Activated CD4-positive, alpha-beta T cell treated with anti-CD3 and anti-CD28 coated beads for 36 hours (primary cell): ENCODE measurements at regions of chr5 and their contacts with region 1.

Region 1: DNA sequence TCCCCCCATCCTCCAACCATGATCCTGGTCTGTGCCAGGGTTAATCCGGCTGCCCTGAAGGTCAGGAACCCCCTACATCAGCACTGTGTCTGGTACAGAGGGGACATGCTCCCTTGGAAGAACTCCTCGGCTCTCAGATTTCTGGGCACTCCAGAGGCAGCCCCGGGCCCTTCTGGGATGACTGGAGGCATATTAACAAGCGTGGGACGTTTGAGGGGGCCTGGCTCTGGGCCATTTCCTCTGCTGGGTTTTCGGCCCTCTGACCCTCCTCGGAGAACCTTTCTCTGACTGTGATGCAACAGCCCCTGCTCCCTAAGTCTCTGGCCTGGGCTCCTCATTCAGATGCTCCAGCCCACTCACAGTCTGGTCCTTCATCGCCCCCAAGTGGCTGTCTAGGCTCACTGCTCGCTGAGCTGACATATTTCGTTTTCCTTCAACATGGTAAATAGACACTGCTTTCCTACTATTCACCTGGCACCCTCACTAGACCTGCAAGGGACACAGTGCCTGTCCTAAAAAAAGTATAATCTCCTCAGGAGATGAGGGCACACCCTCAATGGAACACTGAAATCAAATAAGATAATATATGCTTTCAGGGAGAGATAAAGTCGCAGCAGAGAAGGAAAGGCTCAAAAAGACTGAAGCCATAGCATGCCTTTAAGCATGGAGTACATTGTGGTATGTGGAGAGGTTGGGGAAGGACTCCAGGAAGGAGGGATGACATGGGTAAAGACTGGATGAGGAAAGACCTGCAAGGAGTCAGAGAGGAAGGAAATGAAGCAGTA is 404.7 kb upstream of the TRPC7 start:
- DNase-seq: peak; percentile 68
- ATAC-seq: peak; percentile 64
- H3K4me3 Mint-ChIP-seq: no peak overlapping the region
- H3K27ac Mint-ChIP-seq: no peak overlapping the region
- H3K4me1 Mint-ChIP-seq: no peaks in the 10 kb centered on the region
- H3K27me3 Mint-ChIP-seq: no peaks in the 10 kb centered on the region

Region 2: GRCh38 chr5:135934939-135935338 is 835.2 kb before region 1 on chr5:
- CTCF ChIA-PET with region 1: no interaction called
- POLR2A ChIA-PET with region 1: no interaction called
- intact Hi-C with region 1: no loop called
- DNase-seq: no peak
- ATAC-seq: no peak
- H3K4me3 Mint-ChIP-seq: no peak overlapping the region
- H3K27ac Mint-ChIP-seq: no peak overlapping the region
- H3K4me1 Mint-ChIP-seq: no peaks in the 10 kb centered on the region
- H3K27me3 Mint-ChIP-seq: peaks cover 26% of the 10 kb centered on the region

Region 3: GRCh38 chr5:136249678-136250266 is 520.3 kb before region 1 on chr5:
- CTCF ChIA-PET with region 1: interaction called, 3 read pairs
- POLR2A ChIA-PET with region 1: no interaction called
- intact Hi-C with region 1: loop called in 1 of 2 experiments (anchors 1 kb)
- DNase-seq: peak; percentile 42
- ATAC-seq: no peak
- H3K4me3 Mint-ChIP-seq: no peak overlapping the region
- H3K27ac Mint-ChIP-seq: no peak overlapping the region
- H3K4me1 Mint-ChIP-seq: no peaks in the 10 kb centered on the region
- H3K27me3 Mint-ChIP-seq: peaks cover 5% of the 10 kb centered on the region

Region 4: GRCh38 chr5:136364307-136364706 is 405.8 kb before region 1 on chr5:
- CTCF ChIA-PET with region 1: no interaction called
- POLR2A ChIA-PET with region 1: no interaction called
- intact Hi-C with region 1: loop called in 1 of 2 experiments (anchors 2 kb)
- DNase-seq: peak; percentile 9
- ATAC-seq: no peak
- H3K4me3 Mint-ChIP-seq: no peak overlapping the region
- H3K27ac Mint-ChIP-seq: no peak overlapping the region
- H3K4me1 Mint-ChIP-seq: no peaks in the 10 kb centered on the region
- H3K27me3 Mint-ChIP-seq: peaks cover 17% of the 10 kb centered on the region